ENCODE measurements at regions of chr17 and their contacts with region 1.

Region 1: DNA sequence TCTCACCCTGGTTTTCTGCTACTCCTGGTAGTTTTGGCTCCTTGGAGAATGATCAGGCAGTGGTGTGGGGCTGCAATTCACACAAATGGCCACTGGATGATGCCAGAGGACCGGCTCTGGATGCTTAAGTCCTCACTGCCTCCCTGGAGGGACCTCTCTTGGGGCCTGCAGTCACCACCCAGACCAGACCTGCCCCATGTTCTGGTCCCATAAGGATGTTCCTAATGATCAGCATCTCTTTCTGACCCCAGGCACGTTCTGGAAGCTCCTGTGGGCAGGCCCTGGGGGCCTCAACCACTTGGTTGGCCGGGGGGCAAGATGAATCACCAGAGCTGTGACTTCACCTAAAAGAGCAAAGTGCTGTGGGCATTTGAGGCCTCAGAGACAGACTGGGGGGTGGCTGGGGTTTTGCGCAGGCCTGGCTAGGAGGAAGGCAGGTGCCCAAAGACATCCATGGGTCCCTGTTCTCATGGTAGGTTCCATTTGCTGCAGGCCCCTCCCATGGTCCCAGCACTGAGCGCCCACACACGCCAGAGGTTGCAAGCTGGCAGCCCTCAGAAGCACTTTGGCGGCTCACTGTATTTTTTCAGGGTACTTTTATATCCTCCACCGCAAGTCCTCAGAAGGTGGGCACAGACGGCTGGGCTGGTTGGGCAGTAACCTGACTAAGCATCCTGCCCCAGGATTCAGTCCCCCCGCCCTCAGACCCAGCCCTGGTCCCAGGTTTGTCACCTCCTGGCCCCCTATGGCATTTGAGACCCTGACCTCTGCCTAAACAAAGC is 53.2 kb downstream of the NT5M start:
- DNase-seq: peak; percentile 82
- H3K4me3 Mint-ChIP-seq: no peak overlapping the region
- H3K27ac Mint-ChIP-seq: no peak overlapping the region
- H3K4me1 Mint-ChIP-seq: no peaks in the 10 kb centered on the region
- H3K27me3 Mint-ChIP-seq: peaks cover 41% of the 10 kb centered on the region
- CTCF ChIP-seq: peak; percentile 100

Region 2: DNA sequence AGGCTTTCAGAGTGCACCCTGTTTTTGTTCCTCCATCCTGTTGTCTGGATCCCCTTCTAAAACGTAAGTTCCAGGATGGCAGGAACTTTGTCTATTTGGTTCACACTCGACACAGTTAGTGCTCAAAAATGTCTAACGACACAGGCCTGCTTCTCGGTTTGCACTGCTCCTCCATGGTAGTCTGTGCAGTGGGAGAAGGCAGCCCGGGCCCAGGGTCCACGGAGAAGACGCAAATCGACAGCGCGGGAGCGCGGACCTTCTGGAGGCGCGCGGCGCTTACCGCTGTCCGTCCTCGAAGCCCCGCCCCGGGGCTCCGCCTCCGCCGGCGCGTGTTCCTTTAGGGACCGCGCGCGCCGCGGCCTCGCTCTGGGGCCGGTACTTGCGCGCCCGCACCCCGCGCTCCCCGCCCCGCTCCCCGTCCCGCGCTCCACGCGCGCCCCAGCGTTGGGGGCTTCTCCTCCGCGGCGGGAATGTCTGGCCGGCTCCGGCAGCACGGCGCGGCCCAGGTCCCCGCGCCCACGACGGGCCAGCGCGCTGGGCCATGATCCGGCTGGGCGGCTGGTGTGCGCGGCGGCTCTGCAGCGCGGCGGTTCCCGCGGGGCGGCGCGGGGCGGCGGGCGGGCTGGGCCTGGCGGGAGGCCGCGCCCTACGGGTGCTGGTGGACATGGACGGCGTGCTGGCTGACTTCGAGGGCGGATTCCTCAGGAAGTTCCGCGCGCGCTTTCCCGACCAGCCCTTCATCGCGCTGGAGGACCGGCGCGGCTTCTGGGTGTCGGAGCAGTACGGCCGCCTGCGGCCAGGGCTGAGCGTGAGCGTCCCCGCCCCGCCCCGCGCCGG is 53.1 kb before region 1 on chr17 and contains the start of gene NT5M:
- CTCF ChIA-PET with region 1: no interaction called
- POLR2A ChIA-PET with region 1: no interaction called
- intact Hi-C with region 1: no loop called
- DNase-seq: peak; percentile 67
- H3K4me3 Mint-ChIP-seq: peak within 1 kb of the TSS; percentile 80
- H3K27ac Mint-ChIP-seq: no peak within 1 kb of the TSS
- H3K4me1 Mint-ChIP-seq: peaks cover 7% of the 10 kb centered on the region
- H3K27me3 Mint-ChIP-seq: no peaks in the 10 kb centered on the region
- CTCF ChIP-seq: no peak
- total RNA-seq, gene NT5M: 5.0 and 5.5 TPM in 2 replicates

Region 3: DNA sequence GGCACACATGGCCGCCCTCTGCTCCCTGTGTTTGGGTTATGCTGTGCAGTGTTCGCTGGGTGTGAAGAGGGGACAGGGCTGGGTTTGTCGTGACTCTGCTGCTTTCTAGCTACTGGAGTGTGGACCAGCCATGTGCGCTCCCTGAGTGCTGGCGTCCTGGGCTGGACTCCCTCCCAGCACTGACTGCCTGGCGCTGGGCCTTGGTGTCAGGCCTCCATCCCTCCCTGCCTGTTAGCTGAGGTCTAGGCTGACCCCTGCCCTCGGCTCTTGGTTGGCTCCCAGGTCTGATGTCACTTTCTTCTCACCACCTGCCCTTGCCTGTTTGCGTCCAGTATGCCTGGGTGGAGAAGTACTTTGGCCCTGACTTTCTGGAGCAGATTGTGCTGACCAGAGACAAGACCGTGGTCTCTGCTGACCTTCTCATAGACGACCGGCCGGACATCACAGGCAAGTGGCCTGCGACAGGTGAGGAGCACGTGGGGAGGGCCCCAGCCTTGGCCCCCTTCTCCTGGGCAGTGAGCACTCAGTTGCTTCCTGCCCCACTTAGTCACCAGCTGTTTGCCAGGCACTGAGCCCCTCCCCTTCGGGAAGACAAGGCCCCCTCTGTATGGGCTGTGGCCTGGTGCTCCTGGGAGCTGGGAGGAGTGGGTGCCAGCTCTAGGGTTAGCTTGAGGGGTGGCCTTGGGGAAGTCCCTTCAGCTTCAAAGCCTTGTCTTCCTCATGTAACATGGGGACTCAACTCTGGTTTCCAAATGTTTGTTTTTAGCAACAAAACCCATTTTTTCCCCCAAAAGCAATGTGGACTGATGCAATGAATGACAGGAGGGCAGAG is 11.7 kb before region 1 on chr17:
- CTCF ChIA-PET with region 1: interaction called, 14 read pairs
- POLR2A ChIA-PET with region 1: no interaction called
- intact Hi-C with region 1: no loop called
- DNase-seq: no peak
- H3K4me3 Mint-ChIP-seq: no peak overlapping the region
- H3K27ac Mint-ChIP-seq: no peak overlapping the region
- H3K4me1 Mint-ChIP-seq: no peaks in the 10 kb centered on the region
- H3K27me3 Mint-ChIP-seq: no peaks in the 10 kb centered on the region
- CTCF ChIP-seq: no peak

Region 4: DNA sequence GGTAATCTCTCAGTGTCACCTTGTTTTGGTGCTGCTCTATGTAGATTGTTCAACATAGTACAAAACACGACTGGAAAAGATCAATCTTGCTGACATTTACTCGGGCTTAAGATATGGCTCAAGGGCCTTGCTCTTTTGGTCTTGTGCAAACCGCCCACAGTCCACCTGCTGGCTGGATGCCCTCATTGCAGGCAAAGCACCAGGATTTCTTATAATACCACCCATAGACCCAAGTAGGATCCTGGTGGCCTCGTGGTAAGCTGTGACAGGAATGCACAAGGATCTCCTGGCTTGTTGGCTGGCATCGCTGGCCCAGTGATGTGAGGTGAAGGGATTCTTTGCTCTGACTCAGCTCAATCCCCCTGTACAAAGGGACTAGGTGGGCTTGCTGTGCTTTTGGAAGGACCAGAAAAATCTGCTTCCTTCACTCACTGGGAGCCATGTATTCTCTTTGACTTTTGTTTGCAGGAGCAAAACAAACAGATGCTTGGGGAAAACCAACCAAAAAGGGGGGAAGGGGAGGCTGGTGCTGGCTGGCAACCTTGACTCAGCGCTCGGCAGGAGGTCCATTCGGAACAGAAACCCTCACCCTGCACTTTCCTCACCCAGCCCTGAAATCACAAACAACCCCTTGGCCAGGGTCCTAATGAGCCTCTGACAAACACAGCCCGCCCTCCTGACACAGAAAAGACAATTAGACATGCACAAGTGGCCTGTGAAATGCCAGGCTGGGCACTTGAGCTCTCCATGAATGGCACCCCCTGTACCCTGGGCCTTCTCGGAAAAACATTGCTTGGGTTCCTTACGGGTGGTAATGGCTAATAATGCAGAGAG is 83.9 kb after region 1 on chr17:
- CTCF ChIA-PET with region 1: no interaction called
- POLR2A ChIA-PET with region 1: no interaction called
- intact Hi-C with region 1: loop called (anchors 2 kb)
- DNase-seq: peak; percentile 57
- H3K4me3 Mint-ChIP-seq: no peak overlapping the region
- H3K27ac Mint-ChIP-seq: no peak overlapping the region
- H3K4me1 Mint-ChIP-seq: no peaks in the 10 kb centered on the region
- H3K27me3 Mint-ChIP-seq: no peaks in the 10 kb centered on the region
- CTCF ChIP-seq: peak; percentile 27

Region 5: DNA sequence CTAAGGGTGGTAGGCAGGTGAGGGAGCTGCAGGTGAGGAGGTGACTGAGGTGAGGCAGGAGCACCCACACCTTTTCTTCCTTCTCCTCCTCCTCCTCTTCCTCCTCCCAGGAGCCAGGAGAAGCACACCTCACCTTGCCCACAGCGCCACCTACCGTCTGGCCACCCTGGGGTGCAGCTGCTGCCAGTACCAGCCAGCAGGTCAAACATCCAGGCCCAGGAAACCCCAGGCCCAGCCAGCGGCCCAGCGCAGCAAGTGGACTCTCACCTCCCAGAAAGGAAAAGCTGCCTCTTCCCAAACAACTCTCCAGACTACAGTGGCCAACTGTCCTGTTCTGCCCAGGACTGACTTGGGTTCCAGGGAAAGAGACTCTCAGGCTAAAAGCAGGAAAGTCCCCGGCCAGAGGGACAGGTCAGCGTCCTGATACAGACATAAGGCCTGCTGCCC is 212.4 kb after region 1 on chr17:
- CTCF ChIA-PET with region 1: interaction called, 7 read pairs
- POLR2A ChIA-PET with region 1: no interaction called
- intact Hi-C with region 1: loop called (anchors 1 kb)
- DNase-seq: peak; percentile 64
- H3K4me3 Mint-ChIP-seq: no peak overlapping the region
- H3K27ac Mint-ChIP-seq: no peak overlapping the region
- H3K4me1 Mint-ChIP-seq: no peaks in the 10 kb centered on the region
- H3K27me3 Mint-ChIP-seq: no peaks in the 10 kb centered on the region
- CTCF ChIP-seq: peak; percentile 74

Region 6: DNA sequence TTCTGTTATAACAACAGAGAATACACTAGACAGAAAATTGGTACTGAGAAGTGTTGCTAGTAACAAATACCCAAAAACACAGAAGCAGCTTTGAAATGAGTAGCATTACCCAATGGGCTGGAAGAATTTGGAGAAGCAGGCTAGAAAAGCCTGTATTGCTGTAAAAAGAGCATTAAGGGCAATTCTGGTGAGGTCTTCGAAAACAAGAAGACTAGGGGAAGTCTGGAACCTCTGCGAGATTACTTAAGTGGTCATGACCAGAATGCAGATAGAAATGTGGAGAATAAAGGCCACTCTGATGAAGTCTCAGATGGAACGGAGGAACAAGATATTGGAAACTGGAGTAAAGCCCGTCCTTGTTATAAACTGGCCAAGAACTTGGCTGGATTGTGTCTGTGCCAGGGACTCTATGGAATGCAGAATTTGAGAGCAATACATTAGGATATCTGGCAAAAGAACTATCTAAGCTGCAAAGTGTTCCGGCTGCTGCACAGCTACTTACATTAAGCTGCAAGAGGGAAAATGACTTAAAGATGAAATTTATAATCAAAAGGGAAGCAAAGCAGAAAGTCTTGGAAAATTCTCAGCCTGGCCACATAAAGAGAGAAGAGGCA is 280.0 kb after region 1 on chr17:
- CTCF ChIA-PET with region 1: interaction called, 82 read pairs
- POLR2A ChIA-PET with region 1: no interaction called
- intact Hi-C with region 1: no loop called
- DNase-seq: no peak
- H3K4me3 Mint-ChIP-seq: no peak overlapping the region
- H3K27ac Mint-ChIP-seq: no peak overlapping the region
- H3K4me1 Mint-ChIP-seq: no peaks in the 10 kb centered on the region
- H3K27me3 Mint-ChIP-seq: no peaks in the 10 kb centered on the region
- CTCF ChIP-seq: no peak